Esophagus muscularis mucosa (tissue), 4 donors: ENCODE measurements at regions of chr4 and their contacts with region 1.

Region 1: GRCh38 chr4:1351854-1352633 is 5.0 kb downstream of the UVSSA start:
- DNase-seq: peak; percentile 95
- H3K4me3 ChIP-seq: no peak overlapping the region
- H3K27ac ChIP-seq: peak overlapping the region; percentile 8 to 55 (median 38)
- H3K4me1 ChIP-seq: peaks cover 17 to 48% (median 41%) of the 10 kb centered on the region in 4 donors
- H3K27me3 ChIP-seq: no peaks in the 10 kb centered on the region
- CTCF ChIP-seq: peak; percentile 82 to 96 (median 90)
- EP300 ChIP-seq: no peak
- POLR2A ChIP-seq: no peak

Region 2: DNA sequence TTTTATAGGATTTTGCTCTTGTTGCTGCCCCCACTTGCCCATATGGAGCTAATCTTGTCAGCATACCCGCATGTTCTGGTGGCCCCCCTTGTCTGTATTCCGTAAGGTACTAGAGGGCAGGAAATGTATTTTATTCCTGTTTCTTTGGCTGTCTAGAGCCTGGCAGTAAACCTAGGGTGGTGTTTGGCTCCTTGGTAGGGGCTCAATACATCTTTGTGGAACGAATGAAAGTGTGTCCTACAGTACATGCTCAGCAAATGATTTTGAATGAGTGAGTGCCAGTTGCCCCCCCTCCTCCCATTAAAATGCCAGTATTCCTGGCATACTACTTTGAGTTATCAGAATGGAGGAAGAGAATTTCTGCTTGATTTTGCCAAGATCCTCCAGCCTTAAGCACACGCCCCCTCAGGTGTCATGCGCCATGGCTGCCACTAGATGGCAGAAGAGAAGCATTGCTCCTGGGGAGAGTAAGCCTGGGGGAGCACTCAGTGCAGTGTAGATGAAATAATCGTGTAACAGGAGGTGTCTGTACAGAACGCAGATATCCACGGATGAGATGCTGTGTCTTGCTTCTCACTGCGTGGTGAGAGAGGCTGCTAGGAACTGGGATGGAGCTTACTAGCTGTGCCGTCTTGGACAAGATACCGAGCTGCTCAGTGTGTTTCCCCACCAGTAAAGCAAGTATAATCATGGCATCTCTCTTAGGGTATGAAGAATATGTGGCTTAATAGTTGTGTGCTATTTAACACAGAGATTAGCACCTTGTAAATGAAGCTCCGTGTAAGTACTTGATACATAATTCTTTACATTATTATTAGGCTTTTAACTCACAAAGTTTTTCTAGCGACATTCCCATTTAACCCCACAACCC is 221.5 kb before region 1 on chr4:
- intact Hi-C with region 1: loop called (anchors 5 kb)
- DNase-seq: peak; percentile 95
- H3K4me3 ChIP-seq: no peak overlapping the region
- H3K27ac ChIP-seq: no peak overlapping the region
- H3K4me1 ChIP-seq: peaks cover 0 to 10% (median 4%) of the 10 kb centered on the region in 4 donors
- H3K27me3 ChIP-seq: no peaks in the 10 kb centered on the region
- CTCF ChIP-seq: peak in 2 of 3 experiments; percentile 97 to 98
- EP300 ChIP-seq: no peak
- POLR2A ChIP-seq: no peak

Region 3: GRCh38 chr4:1512738-1513660 is 161.0 kb after region 1 on chr4:
- intact Hi-C with region 1: loop called (anchors 5 kb)
- DNase-seq: no peak
- H3K4me3 ChIP-seq: peak overlapping the region; percentile 36 to 50 (median 44)
- H3K27ac ChIP-seq: peak overlapping the region in 1 of 4 donors; percentile 13
- H3K4me1 ChIP-seq: peaks cover 4 to 16% (median 11%) of the 10 kb centered on the region in 4 donors
- H3K27me3 ChIP-seq: peaks cover 5 to 78% (median 24%) of the 10 kb centered on the region in 4 donors
- CTCF ChIP-seq: peak; percentile 33 to 60 (median 51)
- EP300 ChIP-seq: no peak
- POLR2A ChIP-seq: no peak

Region 4: DNA sequence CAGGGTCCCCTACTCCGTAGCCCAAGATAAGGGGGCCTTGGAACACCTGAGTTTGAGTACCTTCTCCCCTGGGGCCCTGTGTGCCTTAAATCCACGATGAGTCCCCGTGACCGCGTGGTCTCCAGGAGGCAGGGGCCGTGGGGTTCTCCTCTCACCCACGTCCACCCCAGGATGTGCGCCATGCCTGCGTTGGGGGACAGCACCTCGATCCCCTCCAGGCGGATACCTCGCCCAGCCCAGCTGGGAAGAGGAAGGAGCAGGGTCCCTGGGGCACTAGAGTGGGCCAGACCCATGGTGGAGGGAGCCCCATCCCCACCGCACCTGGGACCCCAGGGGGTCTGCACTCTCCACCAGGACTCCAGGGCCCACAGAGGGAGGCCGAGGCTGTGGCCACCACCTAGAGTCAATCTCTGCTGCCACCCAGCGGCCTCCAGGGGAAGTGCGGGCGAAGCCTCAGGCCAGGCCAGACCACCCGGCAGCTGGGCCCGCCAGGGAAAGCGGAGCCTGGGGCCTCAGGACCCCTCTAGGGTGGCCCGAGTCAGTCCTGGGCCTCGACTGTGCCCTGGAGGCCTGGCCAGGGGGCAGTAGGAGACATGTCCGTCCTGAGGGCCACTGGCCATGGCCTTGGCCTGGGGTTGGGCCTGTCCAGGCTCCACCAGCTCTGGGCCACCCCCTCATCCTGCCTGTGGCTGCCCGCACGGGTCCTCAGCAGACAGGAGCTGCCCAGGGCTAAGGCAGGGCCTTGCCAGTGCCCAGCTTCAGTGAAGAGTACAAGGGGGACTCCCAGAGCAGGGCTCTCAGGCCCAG is 277.1 kb after region 1 on chr4:
- intact Hi-C with region 1: loop called (anchors 5 kb)
- DNase-seq: no peak
- H3K4me3 ChIP-seq: no peak overlapping the region
- H3K27ac ChIP-seq: no peak overlapping the region
- H3K4me1 ChIP-seq: peaks cover 0 to 8% (median 4%) of the 10 kb centered on the region in 4 donors
- H3K27me3 ChIP-seq: no peaks in the 10 kb centered on the region
- CTCF ChIP-seq: peak; percentile 86 to 100 (median 92)
- EP300 ChIP-seq: no peak
- POLR2A ChIP-seq: no peak

Region 5: GRCh38 chr4:1721004-1721665 is 369.1 kb after region 1 on chr4 and contains the starts of genes TACC3 and TMEM129:
- intact Hi-C with region 1: loop called (anchors 10 kb)
- DNase-seq: peak; percentile 99
- H3K4me3 ChIP-seq: peak within 1 kb of the TSS; percentile 74 to 96 (median 84)
- H3K27ac ChIP-seq: peak within 1 kb of the TSS; percentile 92 to 99 (median 96)
- H3K4me1 ChIP-seq: peaks cover 41 to 66% (median 54%) of the 10 kb centered on the region in 4 donors
- H3K27me3 ChIP-seq: no peaks in the 10 kb centered on the region
- CTCF ChIP-seq: no peak
- EP300 ChIP-seq: no peak
- POLR2A ChIP-seq: no peak
- total RNA-seq, gene TACC3: 2.5 to 8.8 (median 5.8) TPM
- total RNA-seq, gene TMEM129: 59.3 to 101 (median 72.6) TPM